Dorsolateral prefrontal cortex (tissue), 120 donors: ENCODE measurements at regions of chr14 and their contacts with region 1.

Region 1: DNA sequence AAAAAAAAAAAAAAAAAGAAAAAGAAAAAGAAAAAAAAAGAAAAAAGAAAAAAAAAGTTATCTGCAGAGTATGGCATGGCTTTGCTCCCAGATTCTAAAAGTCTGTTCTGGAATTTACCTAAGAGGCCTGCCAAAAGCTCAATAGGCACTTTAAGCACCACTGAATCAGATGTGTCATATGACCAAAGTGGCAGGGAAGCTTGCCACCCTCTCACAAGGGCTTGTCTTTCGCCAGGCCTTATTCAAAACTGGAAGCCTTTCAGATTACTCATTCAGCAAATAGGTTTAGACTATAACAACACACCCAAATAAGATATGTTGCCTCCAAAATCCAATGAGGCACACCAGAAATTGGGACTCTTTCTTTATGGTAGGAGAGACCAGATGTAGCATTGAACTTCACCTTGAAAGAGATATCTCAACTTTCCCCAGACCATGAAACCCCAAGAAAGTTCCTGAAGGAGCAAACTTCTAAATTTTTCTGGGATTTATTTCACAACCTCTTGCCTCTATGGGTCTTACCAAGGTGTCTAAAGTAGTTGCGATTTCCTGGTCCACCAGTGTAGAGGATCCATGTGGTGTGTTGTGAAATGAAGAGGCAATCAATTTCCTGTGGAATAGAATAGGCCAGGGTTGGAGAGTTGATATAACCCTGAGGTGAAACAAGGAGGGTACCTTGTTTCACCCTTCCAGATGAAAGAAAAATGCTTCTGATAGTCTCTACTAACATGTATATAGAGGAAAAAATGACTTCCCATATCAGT is 218.8 kb downstream of the DAD1 start:
- DNase-seq: no peak
- H3K4me3 ChIP-seq: no peak overlapping the region
- H3K27ac ChIP-seq: peak overlapping the region in 1 of 59 donors; percentile 24
- H3K27me3 ChIP-seq: no peaks in the 10 kb centered on the region
- CTCF ChIP-seq: no peak

Region 2: DNA sequence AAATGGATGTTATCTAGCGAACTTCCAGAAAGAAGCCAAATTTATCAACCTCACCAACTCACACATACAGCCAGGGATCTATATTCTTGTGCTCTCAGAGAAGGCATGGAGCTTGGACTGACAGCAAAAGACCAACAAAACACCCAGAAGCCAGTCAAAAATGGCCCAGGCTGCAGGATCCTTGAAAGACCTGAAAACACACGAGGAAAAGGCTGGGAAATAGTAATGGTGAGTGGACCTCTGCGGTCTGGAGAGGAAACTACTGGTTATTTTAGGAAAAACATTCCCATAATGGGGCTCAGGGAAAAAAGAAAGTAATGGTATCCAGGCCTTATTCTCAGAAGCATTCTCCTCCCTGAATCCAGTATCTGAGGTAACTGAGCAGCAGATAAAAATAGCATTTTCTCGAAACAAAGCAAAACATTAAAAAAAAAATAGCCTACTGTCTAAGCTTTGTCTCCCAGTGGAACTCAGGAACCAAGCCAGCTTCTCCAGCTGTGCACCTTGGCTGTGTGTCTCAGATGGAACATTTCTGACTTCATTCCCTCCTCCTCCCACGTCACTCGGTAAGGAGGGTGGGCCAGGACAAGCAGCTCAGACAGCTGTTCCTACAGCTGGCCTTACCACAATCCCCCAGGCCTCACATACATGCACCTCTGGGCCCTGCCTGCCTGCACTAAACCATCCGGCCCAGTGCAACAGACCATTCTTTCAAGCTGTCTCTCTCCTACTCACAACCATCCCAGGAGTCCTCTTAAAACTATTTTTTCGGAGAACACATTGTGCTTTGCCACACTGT is 31.1 kb before region 1 on chr14:
- intact Hi-C with region 1: loop called in 1 of 2 experiments (anchors 5 kb)
- DNase-seq: peak in 9 of 10 donors; percentile 26 to 80 (median 58)
- H3K4me3 ChIP-seq: peak overlapping the region in 1 of 59 donors; percentile 10
- H3K27ac ChIP-seq: peak overlapping the region; percentile 49 to 94 (median 86)
- H3K27me3 ChIP-seq: no peaks in the 10 kb centered on the region
- CTCF ChIP-seq: peak in 1 of 56 donors; percentile 10